ENCODE measurements at regions of chr2 and their contacts with region 1.

Region 1: GRCh38 chr2:44087036-44087713 is 81.5 kb upstream of the PPM1B start:
- DNase-seq: peak; percentile 76 to 81 (median 78)
- H3K4me3 ChIP-seq: peak overlapping the region; percentile 57 to 86
- H3K4me3 Mint-ChIP-seq: peak overlapping the region; percentile 84 to 91 (median 88)
- H3K27ac ChIP-seq: peak overlapping the region; percentile 23
- H3K27ac Mint-ChIP-seq: peak overlapping the region; percentile 51 to 97 (median 95)
- H3K4me1 ChIP-seq: peaks cover 10% of the 10 kb centered on the region
- H3K4me1 Mint-ChIP-seq: peaks cover 5 to 13% (median 7%) of the 10 kb centered on the region in 4 donors
- H3K27me3 ChIP-seq: no peaks in the 10 kb centered on the region
- H3K27me3 Mint-ChIP-seq: no peaks in the 10 kb centered on the region

Region 2: DNA sequence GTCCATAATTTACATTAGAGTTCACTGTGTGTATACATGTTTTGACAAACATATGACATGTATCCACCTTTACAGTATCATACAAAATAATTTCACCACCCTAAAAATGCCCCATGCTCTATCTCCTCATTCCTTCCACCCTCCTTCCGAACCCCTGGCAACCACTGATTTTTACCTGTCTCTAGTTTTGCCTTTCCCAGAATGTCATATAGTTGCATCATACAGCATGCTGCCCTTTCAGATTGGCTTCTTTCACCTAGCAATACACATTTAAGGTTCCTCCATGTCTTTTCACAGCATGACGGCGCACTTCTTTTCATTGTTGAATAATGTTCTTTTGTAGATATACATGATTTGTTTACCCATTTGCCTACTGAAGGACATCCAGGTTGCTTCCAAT is 101.8 kb before region 1 on chr2:
- CTCF ChIA-PET with region 1: no interaction called
- POLR2A ChIA-PET with region 1: no interaction called
- intact Hi-C with region 1: no loop called
- DNase-seq: no peak
- H3K4me3 ChIP-seq: no peak overlapping the region
- H3K4me3 Mint-ChIP-seq: peak overlapping the region in 1 of 8 donors; percentile 0
- H3K27ac ChIP-seq: no peak overlapping the region
- H3K27ac Mint-ChIP-seq: no peak overlapping the region
- H3K4me1 ChIP-seq: peaks cover 6% of the 10 kb centered on the region
- H3K4me1 Mint-ChIP-seq: peaks cover 19 to 38% (median 29%) of the 10 kb centered on the region in 4 donors
- H3K27me3 ChIP-seq: no peaks in the 10 kb centered on the region
- H3K27me3 Mint-ChIP-seq: no peaks in the 10 kb centered on the region

Region 3: GRCh38 chr2:44098050-44098449 is 10.9 kb after region 1 on chr2:
- CTCF ChIA-PET with region 1: interaction called, 21 read pairs
- POLR2A ChIA-PET with region 1: no interaction called
- intact Hi-C with region 1: no loop called
- DNase-seq: no peak
- H3K4me3 ChIP-seq: no peak overlapping the region
- H3K4me3 Mint-ChIP-seq: no peak overlapping the region
- H3K27ac ChIP-seq: no peak overlapping the region
- H3K27ac Mint-ChIP-seq: peak overlapping the region in 1 of 7 donors; percentile 59
- H3K4me1 ChIP-seq: no peaks in the 10 kb centered on the region
- H3K4me1 Mint-ChIP-seq: peaks cover 3 to 16% (median 5%) of the 10 kb centered on the region in 4 donors
- H3K27me3 ChIP-seq: no peaks in the 10 kb centered on the region
- H3K27me3 Mint-ChIP-seq: peaks cover under 1 to 1% of the 10 kb centered on the region in 2 donors

Region 4: GRCh38 chr2:44167940-44168680 is 80.9 kb after region 1 on chr2:
- CTCF ChIA-PET with region 1: interaction called, 4 read pairs
- POLR2A ChIA-PET with region 1: interaction called, 10 read pairs
- intact Hi-C with region 1: loop called (anchors 1 kb)
- DNase-seq: peak; percentile 96 to 100 (median 99)
- H3K4me3 ChIP-seq: peak overlapping the region; percentile 81 to 99
- H3K4me3 Mint-ChIP-seq: peak overlapping the region; percentile 96 to 100 (median 100)
- H3K27ac ChIP-seq: peak overlapping the region; percentile 98
- H3K27ac Mint-ChIP-seq: peak overlapping the region; percentile 97 to 100 (median 100)
- H3K4me1 ChIP-seq: peaks cover 37% of the 10 kb centered on the region
- H3K4me1 Mint-ChIP-seq: peaks cover 19 to 44% (median 35%) of the 10 kb centered on the region in 4 donors
- H3K27me3 ChIP-seq: no peaks in the 10 kb centered on the region
- H3K27me3 Mint-ChIP-seq: no peaks in the 10 kb centered on the region

Region 5: GRCh38 chr2:44291281-44292248 is 204.4 kb after region 1 on chr2:
- CTCF ChIA-PET with region 1: interaction called, 7 read pairs
- POLR2A ChIA-PET with region 1: no interaction called
- intact Hi-C with region 1: loop called (anchors 2 kb)
- DNase-seq: no peak
- H3K4me3 ChIP-seq: no peak overlapping the region
- H3K4me3 Mint-ChIP-seq: no peak overlapping the region
- H3K27ac ChIP-seq: no peak overlapping the region
- H3K27ac Mint-ChIP-seq: no peak overlapping the region
- H3K4me1 ChIP-seq: peaks cover 7% of the 10 kb centered on the region
- H3K4me1 Mint-ChIP-seq: peaks cover 5 to 10% (median 8%) of the 10 kb centered on the region in 4 donors
- H3K27me3 ChIP-seq: no peaks in the 10 kb centered on the region
- H3K27me3 Mint-ChIP-seq: peaks cover 4 to 8% of the 10 kb centered on the region in 2 donors

Region 6: DNA sequence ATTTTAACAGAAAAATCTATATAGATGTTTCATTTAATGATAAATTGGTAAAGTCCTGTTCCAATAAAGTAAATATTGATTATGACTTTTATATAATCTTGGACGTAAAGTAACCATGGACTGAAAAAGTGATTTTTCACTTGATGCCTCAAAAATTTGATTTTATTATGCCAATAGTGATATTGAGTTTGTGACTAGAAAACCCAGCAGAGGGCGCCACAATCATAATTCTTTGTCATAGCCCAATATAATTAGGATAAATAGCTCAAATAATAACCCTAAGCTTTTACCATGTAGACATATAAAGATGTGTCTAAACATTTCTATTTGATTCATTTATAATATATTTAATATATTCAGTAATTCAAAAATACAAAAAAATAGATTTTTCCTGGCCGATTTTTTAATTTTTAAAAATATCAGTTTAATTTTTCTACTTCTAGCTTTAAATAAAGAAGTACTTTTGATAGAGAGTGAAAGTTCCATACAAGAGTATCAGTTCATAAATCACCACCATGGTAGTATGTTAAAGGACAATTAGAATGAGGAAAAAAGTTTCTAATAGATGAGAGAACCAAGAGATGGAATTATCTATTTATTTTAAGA is 305.3 kb after region 1 on chr2:
- CTCF ChIA-PET with region 1: interaction called, 11 read pairs
- POLR2A ChIA-PET with region 1: no interaction called
- intact Hi-C with region 1: loop called (anchors 2 kb)
- DNase-seq: peak; percentile 3 to 30 (median 21)
- H3K4me3 ChIP-seq: no peak overlapping the region
- H3K4me3 Mint-ChIP-seq: no peak overlapping the region
- H3K27ac ChIP-seq: no peak overlapping the region
- H3K27ac Mint-ChIP-seq: no peak overlapping the region
- H3K4me1 ChIP-seq: no peaks in the 10 kb centered on the region
- H3K4me1 Mint-ChIP-seq: peaks cover 4 to 10% (median 6%) of the 10 kb centered on the region in 4 donors
- H3K27me3 ChIP-seq: no peaks in the 10 kb centered on the region
- H3K27me3 Mint-ChIP-seq: no peaks in the 10 kb centered on the region

Region 7: GRCh38 chr2:44955593-44956392 is 868.6 kb after region 1 on chr2:
- CTCF ChIA-PET with region 1: interaction called, 11 read pairs
- POLR2A ChIA-PET with region 1: no interaction called
- intact Hi-C with region 1: no loop called
- DNase-seq: peak; percentile 51 to 58 (median 57)
- H3K4me3 ChIP-seq: no peak overlapping the region
- H3K4me3 Mint-ChIP-seq: peak overlapping the region in 2 of 8 donors; percentile 6 to 76
- H3K27ac ChIP-seq: no peak overlapping the region
- H3K27ac Mint-ChIP-seq: no peak overlapping the region
- H3K4me1 ChIP-seq: peaks cover 13% of the 10 kb centered on the region
- H3K4me1 Mint-ChIP-seq: peaks cover 11 to 36% (median 24%) of the 10 kb centered on the region in 4 donors
- H3K27me3 ChIP-seq: peaks cover 9% of the 10 kb centered on the region
- H3K27me3 Mint-ChIP-seq: peaks cover 30 to 57% of the 10 kb centered on the region in 2 donors

Measured in CD4-positive, alpha-beta memory T cell (primary cell).